ENCODE measurements at regions of chr15 and their contacts with region 1.

Region 1: DNA sequence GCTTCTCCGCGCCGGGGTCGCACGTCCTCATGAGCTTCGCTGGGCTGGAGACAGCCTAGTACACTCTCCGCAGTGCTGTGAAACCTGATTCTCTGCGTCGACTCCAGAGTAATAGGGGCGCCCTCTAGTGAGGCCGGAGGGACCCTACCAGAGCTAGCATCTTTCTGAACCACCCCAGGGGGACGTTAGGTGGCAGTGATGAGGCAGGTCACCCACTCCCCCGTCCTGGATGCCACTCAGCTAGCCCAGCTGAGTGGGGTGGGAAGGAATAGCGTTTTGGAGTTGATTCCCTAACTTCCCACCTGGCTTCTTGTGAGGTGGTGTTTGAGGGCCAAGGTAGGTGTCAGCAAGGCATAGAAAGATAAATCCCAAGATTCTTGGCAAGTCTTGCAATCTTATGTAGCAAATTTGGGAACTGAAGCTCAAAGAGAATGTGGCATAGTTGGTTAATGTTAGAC is 4.0 kb downstream of the DUOXA2 start:
- DNase-seq: peak; percentile 61 to 93
- H3K4me3 ChIP-seq: peak overlapping the region in 2 of 4 experiments; percentile 38 to 54; a peak in 4 of 8 replicates
- H3K27ac ChIP-seq: no peak overlapping the region
- H3K4me1 ChIP-seq: peaks cover 0 to 17% (median 14%) of the 10 kb centered on the region in 4 experiments; a peak in 6 of 7 replicates
- H3K27me3 ChIP-seq: peaks cover 48 to 61% (median 54%) of the 10 kb centered on the region in 4 experiments
- CTCF ChIP-seq: peak; percentile 99 to 100 (median 100)
- EP300 ChIP-seq: no peak
- POLR2A ChIP-seq: no peak
- RAD21 ChIP-seq: peak; percentile 65 to 77

Region 2: GRCh38 chr15:45088801-45089711 is 29.1 kb before region 1 on chr15:
- CTCF ChIA-PET with region 1: interaction called, 11 read pairs
- POLR2A ChIA-PET with region 1: no interaction called
- DNase-seq: no peak
- H3K4me3 ChIP-seq: no peak overlapping the region
- H3K27ac ChIP-seq: no peak overlapping the region
- H3K4me1 ChIP-seq: no peaks in the 10 kb centered on the region
- H3K27me3 ChIP-seq: no peaks in the 10 kb centered on the region
- CTCF ChIP-seq: no peak
- EP300 ChIP-seq: no peak
- POLR2A ChIP-seq: no peak
- RAD21 ChIP-seq: no peak

Region 3: DNA sequence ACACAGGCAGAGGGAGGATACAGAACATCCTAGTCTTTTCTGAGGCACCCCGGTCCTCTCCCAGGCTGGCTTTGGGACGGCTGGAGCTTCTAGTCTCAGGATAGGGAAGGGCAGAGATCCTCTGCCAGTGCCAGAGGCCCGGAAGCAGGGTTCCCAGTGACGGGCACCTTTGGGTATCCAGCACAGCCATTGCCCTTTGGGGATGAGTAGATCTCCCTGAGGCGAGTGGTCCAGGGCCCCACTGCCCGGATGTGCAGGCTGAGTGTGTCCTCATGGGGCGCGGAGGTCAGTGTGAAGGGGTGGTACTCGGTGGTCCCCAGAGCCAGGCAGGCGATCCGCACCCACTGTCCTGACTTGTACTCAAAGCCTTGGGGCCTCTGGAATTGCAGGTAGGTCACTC is 22.5 kb before region 1 on chr15:
- CTCF ChIA-PET with region 1: interaction called, 14 read pairs
- POLR2A ChIA-PET with region 1: no interaction called
- DNase-seq: no peak
- H3K4me3 ChIP-seq: no peak overlapping the region
- H3K27ac ChIP-seq: no peak overlapping the region
- H3K4me1 ChIP-seq: peaks cover 0 to 4% (median 2%) of the 10 kb centered on the region in 4 experiments; a peak in 3 of 7 replicates
- H3K27me3 ChIP-seq: 0 out of 7 replicates have a peak, but pooled peaks cover 0 to 3% (median 0%) of the 10 kb centered on the region in 4 experiments
- CTCF ChIP-seq: no peak
- EP300 ChIP-seq: no peak
- POLR2A ChIP-seq: no peak
- RAD21 ChIP-seq: no peak

Region 4: DNA sequence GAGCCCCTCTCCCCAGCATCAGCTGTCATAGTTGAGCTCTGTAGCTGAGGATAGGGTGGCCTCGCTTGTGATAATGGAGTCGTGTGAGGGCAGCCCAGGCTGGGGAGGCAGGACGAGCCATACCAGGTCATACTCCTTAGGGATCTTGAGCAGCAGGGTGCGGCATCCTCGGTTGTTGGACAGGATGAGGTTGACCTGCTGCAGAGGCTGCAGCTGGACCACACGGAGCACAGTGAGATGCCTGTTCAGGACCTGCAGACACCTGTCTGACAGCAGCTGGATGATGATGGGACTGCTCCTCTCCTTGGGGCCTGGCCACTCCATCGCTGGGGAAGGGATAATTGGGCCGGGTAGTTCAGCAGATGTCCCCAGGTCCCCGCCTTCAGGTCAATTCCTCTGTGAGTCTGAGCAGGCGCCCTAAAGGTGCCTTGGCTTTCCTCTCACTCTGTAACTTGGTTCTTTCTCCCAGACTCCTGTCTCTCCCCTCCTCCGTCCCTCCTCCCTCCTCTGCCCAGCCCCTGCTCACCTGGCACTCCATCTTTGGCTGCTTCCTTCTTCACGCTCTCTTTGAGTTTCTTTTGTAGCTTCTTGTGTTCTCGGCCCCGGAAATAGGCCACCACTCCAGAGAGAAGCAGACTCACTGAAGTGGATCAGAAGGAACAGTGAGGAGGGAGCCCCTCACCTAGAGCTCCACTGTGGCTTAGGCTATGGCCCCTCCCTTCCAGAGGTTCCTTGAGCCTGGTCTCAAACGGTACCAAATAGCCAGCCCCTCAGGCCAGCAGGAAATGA is 12.0 kb before region 1 on chr15:
- CTCF ChIA-PET with region 1: interaction called, 29 read pairs
- POLR2A ChIA-PET with region 1: interaction called, 3 read pairs
- DNase-seq: no peak
- H3K4me3 ChIP-seq: no peak overlapping the region
- H3K27ac ChIP-seq: no peak overlapping the region
- H3K4me1 ChIP-seq: peaks cover 0 to 6% (median 2%) of the 10 kb centered on the region in 4 experiments; a peak in 5 of 7 replicates
- H3K27me3 ChIP-seq: peaks cover 17 to 31% (median 26%) of the 10 kb centered on the region in 4 experiments
- CTCF ChIP-seq: no peak
- EP300 ChIP-seq: no peak
- POLR2A ChIP-seq: no peak
- RAD21 ChIP-seq: no peak

Region 5: GRCh38 chr15:45134682-45135604 is 16.8 kb after region 1 on chr15:
- CTCF ChIA-PET with region 1: interaction called, 57 read pairs
- POLR2A ChIA-PET with region 1: interaction called, 4 read pairs
- DNase-seq: peak in 1 of 2 experiments; percentile 71
- H3K4me3 ChIP-seq: peak overlapping the region; percentile 8 to 57 (median 36); a peak in 7 of 8 replicates
- H3K27ac ChIP-seq: no peak overlapping the region
- H3K4me1 ChIP-seq: peaks cover 0 to 8% (median 6%) of the 10 kb centered on the region in 4 experiments; a peak in 5 of 7 replicates
- H3K27me3 ChIP-seq: peaks cover 59 to 76% (median 68%) of the 10 kb centered on the region in 4 experiments
- CTCF ChIP-seq: peak; percentile 4 to 25 (median 18); a peak in 3 of 4 replicates
- EP300 ChIP-seq: no peak
- POLR2A ChIP-seq: no peak
- RAD21 ChIP-seq: peak in 1 of 2 experiments; percentile 24; a peak in 1 of 4 replicates

Region 6: DNA sequence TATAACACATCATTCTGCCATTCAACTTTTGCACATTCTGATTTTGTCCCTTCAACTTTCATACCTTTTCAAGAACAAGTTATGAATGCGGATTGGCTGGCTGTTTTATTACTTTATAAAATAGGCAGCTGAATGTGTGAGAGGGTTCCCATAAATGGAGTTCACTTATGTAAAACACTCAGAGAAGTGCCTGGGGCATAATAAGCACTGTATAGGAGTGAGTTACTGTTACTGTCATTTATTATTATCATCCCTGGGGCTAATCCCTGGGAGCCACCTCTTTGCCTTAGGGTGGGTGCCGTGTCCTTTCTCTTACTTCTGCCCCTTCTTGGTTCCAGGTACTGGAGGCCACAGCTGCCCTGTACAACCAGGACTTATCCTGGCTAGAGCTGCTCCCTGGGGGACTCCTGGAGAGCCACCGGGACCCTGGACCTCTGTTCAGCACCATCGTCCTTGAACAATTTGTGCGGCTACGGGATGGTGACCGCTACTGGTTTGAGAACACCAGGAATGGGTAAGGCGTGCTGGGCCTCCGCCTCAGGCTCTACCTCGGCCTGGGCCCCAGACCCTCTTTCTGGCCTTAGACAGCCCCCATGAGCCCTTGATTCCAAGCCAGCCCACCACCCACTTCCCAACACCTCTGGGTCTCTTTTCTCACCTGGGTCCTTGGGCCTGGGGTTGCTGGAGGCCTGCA is 22.5 kb after region 1 on chr15:
- CTCF ChIA-PET with region 1: interaction called, 57 read pairs
- POLR2A ChIA-PET with region 1: interaction called, 3 read pairs
- DNase-seq: no peak
- H3K4me3 ChIP-seq: no peak overlapping the region
- H3K27ac ChIP-seq: no peak overlapping the region
- H3K4me1 ChIP-seq: peaks cover 0 to 4% (median 1%) of the 10 kb centered on the region in 4 experiments; a peak in 3 of 7 replicates
- H3K27me3 ChIP-seq: peaks cover 6 to 20% (median 13%) of the 10 kb centered on the region in 4 experiments
- CTCF ChIP-seq: no peak
- EP300 ChIP-seq: no peak
- POLR2A ChIP-seq: no peak
- RAD21 ChIP-seq: no peak